Adrenal gland (tissue), 19 donors: ENCODE measurements at regions of chr19 and their contacts with region 1.

Region 1: DNA sequence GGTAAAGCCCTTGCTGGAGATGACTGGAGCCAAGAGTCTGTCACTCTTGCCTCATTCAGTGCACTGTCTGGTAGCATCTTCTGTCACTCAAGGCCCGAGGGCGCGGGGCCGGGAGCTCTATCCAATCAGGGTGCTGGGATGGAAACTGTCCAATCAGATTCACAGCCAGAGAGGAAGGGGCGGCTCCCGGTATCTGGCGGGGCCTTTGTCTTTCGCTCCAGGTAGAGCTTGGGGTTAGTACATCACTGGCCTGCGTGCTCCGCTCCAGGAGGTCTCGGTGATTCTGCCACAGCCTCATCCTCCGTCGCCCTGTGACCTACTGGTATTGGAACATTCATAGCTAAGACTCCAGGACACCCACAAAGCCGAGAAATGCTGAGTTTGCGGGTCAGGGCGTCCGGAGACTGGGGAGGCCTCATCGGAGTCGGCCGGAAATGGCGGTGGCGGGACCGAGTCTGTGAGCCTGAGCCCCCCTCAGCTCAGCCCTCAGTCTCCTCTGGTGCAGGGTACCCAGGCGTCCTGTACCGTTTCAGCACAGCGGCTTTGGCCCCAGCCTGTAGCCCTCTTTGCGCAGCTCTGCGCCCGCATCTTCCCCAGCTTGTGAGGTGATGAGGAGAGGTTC is 20.6 kb upstream of the ZNF430 start:
- DNase-seq: peak; percentile 89 to 98 (median 96)
- H3K4me3 ChIP-seq: peak overlapping the region in 2 of 4 donors; percentile 18 to 56
- H3K27ac ChIP-seq: no peak overlapping the region
- H3K4me1 ChIP-seq: peaks cover 0 to 5% of the 10 kb centered on the region in 2 donors
- H3K27me3 ChIP-seq: no peaks in the 10 kb centered on the region
- CTCF ChIP-seq: no peak
- POLR2A ChIP-seq: no peak

Region 2: GRCh38 chr19:20776083-20777076 is 223.5 kb before region 1 on chr19 and contains the start of gene ZNF66:
- intact Hi-C with region 1: loop called in 1 of 2 experiments (anchors 10 kb)
- DNase-seq: peak; percentile 98 to 100 (median 99)
- H3K4me3 ChIP-seq: peak within 1 kb of the TSS; percentile 1 to 87 (median 82)
- H3K27ac ChIP-seq: peak within 1 kb of the TSS in 4 of 5 donors; percentile 43 to 81 (median 70)
- H3K4me1 ChIP-seq: peaks cover 0 to 13% of the 10 kb centered on the region in 2 donors
- H3K27me3 ChIP-seq: no peaks in the 10 kb centered on the region
- CTCF ChIP-seq: no peak
- POLR2A ChIP-seq: peak; percentile 37 to 87
- total RNA-seq, gene ZNF66: 1.4 to 16.1 (median 4.7) TPM

Region 3: GRCh38 chr19:20964798-20965197 is 35.0 kb before region 1 on chr19:
- intact Hi-C with region 1: no loop called
- DNase-seq: no peak
- H3K4me3 ChIP-seq: no peak overlapping the region
- H3K27ac ChIP-seq: no peak overlapping the region
- H3K4me1 ChIP-seq: no peaks in the 10 kb centered on the region
- H3K27me3 ChIP-seq: no peaks in the 10 kb centered on the region
- CTCF ChIP-seq: no peak
- POLR2A ChIP-seq: no peak

Region 4: GRCh38 chr19:21052902-21053301 is 53.1 kb after region 1 on chr19:
- intact Hi-C with region 1: no loop called
- DNase-seq: no peak
- H3K4me3 ChIP-seq: no peak overlapping the region
- H3K27ac ChIP-seq: no peak overlapping the region
- H3K4me1 ChIP-seq: no peaks in the 10 kb centered on the region
- H3K27me3 ChIP-seq: no peaks in the 10 kb centered on the region
- CTCF ChIP-seq: no peak
- POLR2A ChIP-seq: no peak

Region 5: DNA sequence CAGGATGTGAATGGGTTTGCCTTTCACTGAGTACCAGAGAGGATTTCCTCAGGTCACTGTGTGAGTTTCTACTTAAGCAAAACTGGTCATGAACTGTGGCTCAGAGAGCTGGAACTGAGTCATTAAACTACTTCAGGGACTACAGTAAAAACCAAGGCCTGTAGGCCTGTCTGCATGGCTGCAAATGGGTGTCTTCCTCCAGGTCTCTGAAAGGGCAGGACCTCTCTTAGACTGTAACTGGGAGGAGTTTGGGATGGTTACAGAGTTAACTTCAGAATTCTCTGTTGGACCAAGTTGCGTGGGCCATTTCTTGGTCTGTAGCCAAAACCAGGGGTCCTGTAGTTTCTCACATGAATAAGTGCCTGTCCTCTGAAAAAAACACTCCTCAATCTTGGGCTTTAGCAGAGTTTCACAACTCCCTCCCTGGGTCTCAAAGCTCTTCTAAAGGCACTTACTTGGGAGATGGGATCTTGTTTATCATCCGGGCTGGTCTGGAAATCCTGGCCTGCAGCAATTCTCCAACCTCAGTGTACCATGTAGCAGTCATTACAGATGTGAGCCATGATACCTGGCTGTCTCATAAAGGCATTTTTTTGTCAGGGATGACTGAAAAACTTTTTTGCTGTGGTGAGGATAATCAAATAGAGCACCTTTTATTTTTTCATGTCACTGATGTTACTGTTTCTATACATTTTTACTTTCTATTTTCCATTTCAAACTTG is 101.8 kb after region 1 on chr19:
- intact Hi-C with region 1: no loop called
- DNase-seq: peak in 1 of 7 donors; percentile 16
- H3K4me3 ChIP-seq: no peak overlapping the region
- H3K27ac ChIP-seq: no peak overlapping the region
- H3K4me1 ChIP-seq: no peaks in the 10 kb centered on the region
- H3K27me3 ChIP-seq: no peaks in the 10 kb centered on the region
- CTCF ChIP-seq: no peak
- POLR2A ChIP-seq: no peak